ENCODE measurements at regions of chr17 and their contacts with region 1.

Region 1: DNA sequence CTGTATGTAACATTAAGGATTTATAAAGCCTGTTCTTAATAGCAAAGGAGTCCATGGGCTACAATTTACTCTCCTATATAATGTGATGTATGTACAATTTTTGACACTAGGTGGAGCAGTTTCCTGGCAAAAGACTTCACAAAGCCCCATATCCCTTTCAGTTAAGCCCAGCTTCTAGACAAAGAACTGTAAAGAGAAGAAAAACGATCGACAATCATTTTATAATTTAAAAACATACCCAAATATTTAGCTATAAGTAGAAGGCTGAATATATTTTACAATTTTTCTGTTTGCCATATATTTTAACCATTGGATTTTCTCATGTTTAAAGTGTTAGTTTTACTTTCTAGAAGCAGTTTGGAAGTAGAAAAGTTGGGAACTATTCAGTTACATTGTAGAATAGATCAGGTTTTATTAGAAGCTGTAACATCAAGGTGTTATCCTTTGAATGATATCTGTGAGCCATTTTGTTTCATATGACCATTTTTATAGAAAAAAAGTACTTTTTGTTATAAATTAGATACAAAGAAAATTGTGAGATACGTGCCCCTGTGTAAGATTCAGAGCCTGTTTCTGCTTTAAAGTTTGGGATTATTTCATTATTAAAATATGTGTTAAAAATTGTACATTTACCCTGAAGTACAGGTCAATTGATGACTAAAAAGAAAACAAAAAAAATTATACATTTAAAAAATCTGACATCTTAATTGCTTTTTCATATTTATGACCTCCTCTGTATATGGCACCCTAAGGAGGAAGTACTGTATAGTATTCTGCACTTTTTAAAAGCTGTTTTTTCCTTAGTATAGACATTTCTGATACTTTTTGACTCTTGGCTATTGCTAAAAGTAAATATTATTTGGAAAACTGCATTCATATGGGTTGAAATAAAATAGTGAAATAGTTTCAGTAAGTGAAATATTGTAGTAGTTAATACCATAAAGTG is 46.3 kb downstream of the VMP1 start:
- DNase-seq: peak; percentile 84
- H3K4me3 ChIP-seq: peak overlapping the region; percentile 27
- H3K27ac ChIP-seq: no peak overlapping the region
- H3K27me3 ChIP-seq: no peaks in the 10 kb centered on the region
- CTCF ChIP-seq: peak; percentile 67

Region 2: DNA sequence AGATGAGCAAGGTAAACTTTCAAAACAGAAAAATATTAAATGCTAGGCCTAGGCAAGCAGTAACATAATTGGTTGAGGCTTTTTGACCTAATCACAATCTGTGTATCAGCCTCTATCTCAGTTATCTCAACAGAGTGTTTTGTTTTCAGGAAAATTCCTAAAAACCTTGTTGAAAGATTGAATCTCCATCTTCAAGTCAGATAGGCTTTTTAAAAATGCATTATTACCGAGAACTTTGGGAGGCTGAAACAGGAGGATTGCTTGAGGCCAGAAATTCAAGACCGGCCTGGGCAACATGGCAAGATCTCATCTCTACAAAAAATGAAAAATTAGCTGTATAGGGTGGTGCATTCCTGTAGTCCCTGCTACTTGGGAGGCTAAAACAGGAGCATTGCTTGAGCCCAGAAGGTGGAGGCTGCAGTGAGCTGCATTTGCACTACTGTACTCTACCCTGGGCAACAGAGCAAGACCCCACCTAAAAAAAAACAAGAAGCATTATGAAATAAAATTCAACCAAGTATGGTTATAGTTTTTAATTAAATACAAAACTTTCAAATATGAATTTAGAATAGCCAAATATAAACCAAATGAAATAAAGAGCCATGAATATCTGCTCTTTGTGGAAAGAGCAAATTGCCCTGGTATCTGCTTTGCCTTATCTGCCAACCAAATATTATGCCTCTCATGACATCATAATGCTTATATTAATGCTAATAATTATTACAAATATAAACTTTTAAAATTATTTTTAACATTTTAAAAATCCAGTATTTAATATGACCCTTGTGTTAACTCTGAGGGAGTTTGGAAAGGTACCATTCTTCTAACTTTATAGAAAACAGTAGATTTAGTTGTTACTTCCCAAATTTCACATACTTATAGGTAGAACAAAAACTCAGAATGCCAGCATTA is 22.2 kb after region 1 on chr17:
- CTCF ChIA-PET with region 1: interaction called, 10 read pairs
- POLR2A ChIA-PET with region 1: interaction called, 3 read pairs
- DNase-seq: no peak
- H3K4me3 ChIP-seq: no peak overlapping the region
- H3K27ac ChIP-seq: no peak overlapping the region
- H3K27me3 ChIP-seq: no peaks in the 10 kb centered on the region
- CTCF ChIP-seq: no peak

Region 3: GRCh38 chr17:59859444-59860025 is 105.7 kb after region 1 on chr17:
- CTCF ChIA-PET with region 1: interaction called, 4 read pairs
- POLR2A ChIA-PET with region 1: interaction called, 11 read pairs
- DNase-seq: no peak
- H3K4me3 ChIP-seq: no peak overlapping the region
- H3K27ac ChIP-seq: no peak overlapping the region
- H3K27me3 ChIP-seq: no peaks in the 10 kb centered on the region
- CTCF ChIP-seq: peak; percentile 68